ENCODE measurements at regions of chr4 and their contacts with region 1.

Region 1: DNA sequence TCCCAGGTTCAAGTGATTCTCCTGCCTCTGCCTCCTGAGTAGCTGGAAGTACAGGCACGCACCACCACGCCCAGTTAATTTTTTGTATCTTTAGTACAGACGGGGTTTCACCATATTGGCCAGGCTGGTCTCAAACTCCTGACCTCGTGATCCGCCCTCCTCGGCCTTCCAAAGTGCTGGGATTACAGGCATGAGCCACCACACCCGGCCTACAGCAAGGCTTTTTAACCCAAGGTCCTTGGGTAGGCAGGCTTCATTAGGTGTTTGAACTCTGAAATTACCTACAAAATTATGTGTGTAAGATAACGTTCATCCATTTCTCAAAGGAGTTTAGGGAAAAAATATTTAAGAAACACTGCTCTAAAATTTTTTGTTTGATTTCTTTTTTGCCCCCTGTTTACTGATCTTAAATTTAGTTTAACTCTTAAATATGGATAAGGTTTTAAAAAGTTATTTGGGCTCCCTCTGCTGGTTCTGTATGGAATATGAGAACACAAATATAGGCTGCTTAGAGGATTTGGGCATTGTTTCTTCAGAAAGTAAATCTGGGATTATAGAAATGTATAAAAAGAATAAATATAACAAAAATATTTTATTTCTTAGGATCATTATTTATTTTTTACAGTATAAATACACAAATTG is 92.8 kb downstream of the CBR4 start:
- DNase-seq: no peak
- H3K4me3 ChIP-seq: no peak overlapping the region
- H3K27ac ChIP-seq: peak overlapping the region; percentile 27
- H3K4me1 ChIP-seq: no peaks in the 10 kb centered on the region
- H3K27me3 ChIP-seq: no peaks in the 10 kb centered on the region
- CTCF ChIP-seq: peak; percentile 42 to 73 (median 50)
- POLR2A ChIP-seq: no peak

Region 2: DNA sequence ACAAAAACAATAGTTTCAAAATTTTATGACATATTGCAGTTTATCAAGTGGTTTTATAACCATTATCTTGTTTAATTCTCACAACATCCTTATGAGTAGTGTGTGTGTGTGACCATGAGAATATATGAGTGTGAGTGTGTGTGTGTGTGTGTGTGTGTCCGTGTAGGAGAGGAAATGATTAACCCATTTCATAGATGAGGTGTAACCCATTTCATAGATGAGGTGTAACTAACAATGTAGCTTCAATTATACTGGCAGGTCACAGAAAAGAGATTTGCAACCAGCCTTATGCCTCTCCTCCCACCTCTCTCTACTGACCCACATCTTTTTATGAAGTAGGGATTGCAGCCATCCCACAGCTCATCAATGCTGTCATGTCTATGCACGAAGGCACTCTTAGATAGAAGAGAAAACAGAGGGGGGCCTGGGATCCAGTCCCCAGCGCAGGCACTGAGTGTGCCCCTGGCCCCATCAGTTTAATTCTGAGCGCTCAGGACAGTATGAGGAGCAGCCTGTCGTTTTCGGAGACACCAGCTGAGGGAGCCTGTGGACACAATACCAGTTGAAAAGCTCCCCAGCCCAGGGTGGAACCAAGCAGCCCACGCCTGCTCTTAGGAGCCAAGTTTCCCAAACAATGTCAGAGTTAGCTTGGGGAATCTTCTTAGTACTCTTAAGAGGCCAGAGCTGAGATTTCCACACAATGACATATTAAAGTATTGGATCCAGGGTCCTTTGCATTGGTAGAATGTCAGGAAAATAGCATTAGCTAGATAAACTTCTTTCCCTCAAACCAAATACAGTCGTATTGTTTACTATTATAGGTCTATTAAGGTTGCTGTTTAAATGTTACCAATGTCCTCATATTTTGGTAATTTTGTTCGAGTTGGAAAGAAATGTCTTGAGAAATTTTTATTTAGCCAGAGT is 331.8 kb before region 1 on chr4:
- intact Hi-C with region 1: loop called (anchors 5 kb)
- DNase-seq: peak in 1 of 2 donors; percentile 93
- H3K4me3 ChIP-seq: no peak overlapping the region
- H3K27ac ChIP-seq: peak overlapping the region; percentile 8
- H3K4me1 ChIP-seq: peaks cover 30% of the 10 kb centered on the region
- H3K27me3 ChIP-seq: no peaks in the 10 kb centered on the region
- CTCF ChIP-seq: peak in 2 of 3 experiments; percentile 56 to 75
- POLR2A ChIP-seq: no peak

Region 3: DNA sequence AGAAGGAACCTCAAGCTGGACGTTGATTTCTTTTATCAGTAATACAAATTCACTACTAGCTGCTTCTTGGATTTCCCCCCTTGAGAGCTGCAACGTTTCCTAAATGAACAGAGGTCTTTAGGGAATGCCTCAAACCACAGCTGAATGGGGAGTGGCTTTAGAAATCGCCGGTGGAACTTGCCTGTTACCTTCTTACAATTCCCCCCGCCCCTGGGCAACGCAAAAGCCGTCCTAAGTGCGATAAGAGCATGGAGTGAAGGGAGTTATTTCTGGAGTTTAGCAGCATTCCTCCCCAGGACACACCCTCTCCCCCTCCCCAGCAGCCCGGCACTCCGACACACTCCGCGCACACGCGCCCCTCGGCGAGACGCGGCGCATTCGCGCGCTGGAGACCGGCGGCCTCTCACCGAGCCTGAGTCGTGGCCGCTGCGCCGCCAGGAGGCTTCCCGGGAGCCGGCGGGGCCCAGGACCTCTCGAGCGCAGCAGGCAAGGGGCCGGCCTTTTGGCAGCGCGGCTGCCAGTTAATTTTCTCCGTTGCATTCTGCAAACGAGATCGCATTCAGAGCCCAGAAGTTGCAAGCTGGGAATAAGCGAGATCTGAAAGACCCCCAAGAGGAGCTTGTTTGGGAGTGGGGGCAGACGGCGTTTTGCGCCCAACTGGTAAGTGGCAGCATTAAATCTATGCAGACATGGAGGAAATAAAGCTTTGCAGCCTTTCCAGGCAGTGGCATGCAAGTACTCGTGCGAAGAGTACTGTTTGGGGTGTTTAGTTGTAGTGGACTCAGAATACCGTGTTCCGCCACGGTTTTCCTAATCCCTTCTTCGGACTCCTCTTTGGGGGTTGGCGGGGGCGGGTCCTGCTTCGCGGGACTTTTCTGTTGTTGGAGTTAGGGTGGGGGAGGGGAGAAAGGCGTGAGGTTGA is 285.8 kb before region 1 on chr4:
- intact Hi-C with region 1: no loop called
- DNase-seq: no peak
- H3K4me3 ChIP-seq: peak overlapping the region; percentile 56 to 58
- H3K27ac ChIP-seq: peak overlapping the region; percentile 80
- H3K4me1 ChIP-seq: peaks cover 35% of the 10 kb centered on the region
- H3K27me3 ChIP-seq: no peaks in the 10 kb centered on the region
- CTCF ChIP-seq: peak in 1 of 3 experiments; percentile 43
- POLR2A ChIP-seq: peak in 1 of 2 donors; percentile 6

Region 4: DNA sequence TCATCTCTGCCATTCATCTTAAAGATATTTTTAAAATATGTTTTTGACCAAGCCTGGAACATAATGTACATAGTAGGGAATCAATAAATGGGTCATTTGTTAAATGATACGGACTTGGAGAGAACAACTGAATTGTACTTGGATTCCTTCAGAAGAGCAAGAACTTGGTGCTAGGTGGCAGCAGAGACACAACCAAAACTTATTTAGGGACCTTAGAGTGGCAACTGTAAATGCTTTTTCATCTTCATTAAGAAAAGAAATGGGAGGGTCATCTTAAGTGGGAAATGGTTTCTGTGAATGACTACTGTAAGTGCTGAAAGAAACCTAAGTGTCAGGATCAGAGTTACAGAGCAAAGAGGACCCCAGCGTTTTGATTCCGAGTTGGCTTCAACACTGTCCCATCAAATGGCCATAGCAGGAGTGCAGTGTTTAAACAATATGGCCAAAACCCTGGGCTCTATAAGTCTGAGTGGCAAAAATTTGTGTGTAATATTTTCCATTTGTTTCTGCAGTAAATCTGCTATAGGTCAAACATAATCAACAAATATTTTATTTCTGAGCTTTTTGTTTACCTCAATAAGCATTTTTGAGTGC is 206.8 kb before region 1 on chr4:
- intact Hi-C with region 1: loop called (anchors 10 kb)
- DNase-seq: no peak
- H3K4me3 ChIP-seq: no peak overlapping the region
- H3K27ac ChIP-seq: no peak overlapping the region
- H3K4me1 ChIP-seq: peaks cover 17% of the 10 kb centered on the region
- H3K27me3 ChIP-seq: no peaks in the 10 kb centered on the region
- CTCF ChIP-seq: peak; percentile 28 to 58 (median 51)
- POLR2A ChIP-seq: no peak

Region 5: DNA sequence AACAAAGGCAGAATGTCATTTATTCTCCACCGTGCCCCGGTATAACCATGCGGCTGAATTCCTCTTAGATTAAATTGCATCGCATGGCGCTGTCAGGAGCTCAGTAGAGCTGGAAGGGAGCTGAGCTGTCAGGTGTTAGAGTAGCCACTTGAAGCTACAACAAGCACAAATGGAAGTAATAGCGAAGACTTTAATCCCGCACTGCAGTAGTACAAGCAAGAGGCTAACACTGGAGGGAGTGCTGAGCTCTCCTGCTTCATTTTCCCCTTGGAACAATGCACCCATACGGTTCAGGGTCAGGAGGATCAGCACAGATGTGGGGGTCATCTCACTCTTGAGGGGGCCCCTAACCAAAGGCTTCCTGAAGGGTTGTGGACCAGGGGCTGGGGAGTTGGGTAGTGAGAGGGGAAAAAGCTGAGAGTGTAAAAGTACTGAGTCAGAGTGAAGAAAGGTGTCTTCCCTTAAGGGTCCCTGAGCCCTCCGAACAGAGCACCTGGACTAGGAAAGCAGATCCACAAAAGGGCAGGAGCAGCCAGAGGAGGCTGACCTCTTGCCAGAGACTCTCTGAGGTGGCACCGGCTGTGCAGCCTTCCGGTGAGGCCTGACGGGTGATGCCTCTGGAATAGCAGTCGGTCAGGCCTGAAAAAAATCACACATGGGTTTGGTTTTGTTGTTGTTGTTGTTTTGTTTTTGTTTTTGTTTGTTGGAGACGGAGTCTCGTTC is 128.8 kb after region 1 on chr4:
- intact Hi-C with region 1: no loop called
- DNase-seq: no peak
- H3K4me3 ChIP-seq: no peak overlapping the region
- H3K27ac ChIP-seq: no peak overlapping the region
- H3K4me1 ChIP-seq: peaks cover 12% of the 10 kb centered on the region
- H3K27me3 ChIP-seq: no peaks in the 10 kb centered on the region
- CTCF ChIP-seq: no peak
- POLR2A ChIP-seq: no peak

Measured in vagina (tissue), 2 donors.